Left cardiac atrium (tissue), 4 donors: ENCODE measurements at regions of chr15 and their contacts with region 1.

Region 1: GRCh38 chr15:89139400-89140166 is 51.3 kb downstream of the ABHD2 start:
- DNase-seq: no peak
- ATAC-seq: peak; percentile 15 to 31

Region 2: DNA sequence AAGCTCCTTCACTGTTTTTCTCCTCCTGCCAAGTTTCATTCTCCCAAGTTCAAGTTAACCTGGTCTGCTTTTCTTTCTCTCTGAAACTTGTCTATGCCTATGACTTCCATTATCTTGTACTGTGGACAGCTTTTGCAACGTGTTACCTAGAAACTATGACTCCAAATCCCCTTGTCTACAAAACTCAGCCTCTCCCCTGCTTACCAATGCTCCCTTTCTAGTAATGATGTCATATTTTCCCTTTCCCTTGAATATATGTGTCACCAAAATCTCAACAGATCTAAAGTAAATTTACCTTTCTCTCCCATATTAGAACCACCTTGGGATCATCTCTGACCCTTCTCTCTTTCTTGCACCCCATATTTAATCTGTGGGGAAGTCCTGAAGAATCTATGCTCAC is 61.8 kb before region 1 on chr15:
- intact Hi-C with region 1: no loop called
- DNase-seq: no peak
- ATAC-seq: no peak

Region 3: DNA sequence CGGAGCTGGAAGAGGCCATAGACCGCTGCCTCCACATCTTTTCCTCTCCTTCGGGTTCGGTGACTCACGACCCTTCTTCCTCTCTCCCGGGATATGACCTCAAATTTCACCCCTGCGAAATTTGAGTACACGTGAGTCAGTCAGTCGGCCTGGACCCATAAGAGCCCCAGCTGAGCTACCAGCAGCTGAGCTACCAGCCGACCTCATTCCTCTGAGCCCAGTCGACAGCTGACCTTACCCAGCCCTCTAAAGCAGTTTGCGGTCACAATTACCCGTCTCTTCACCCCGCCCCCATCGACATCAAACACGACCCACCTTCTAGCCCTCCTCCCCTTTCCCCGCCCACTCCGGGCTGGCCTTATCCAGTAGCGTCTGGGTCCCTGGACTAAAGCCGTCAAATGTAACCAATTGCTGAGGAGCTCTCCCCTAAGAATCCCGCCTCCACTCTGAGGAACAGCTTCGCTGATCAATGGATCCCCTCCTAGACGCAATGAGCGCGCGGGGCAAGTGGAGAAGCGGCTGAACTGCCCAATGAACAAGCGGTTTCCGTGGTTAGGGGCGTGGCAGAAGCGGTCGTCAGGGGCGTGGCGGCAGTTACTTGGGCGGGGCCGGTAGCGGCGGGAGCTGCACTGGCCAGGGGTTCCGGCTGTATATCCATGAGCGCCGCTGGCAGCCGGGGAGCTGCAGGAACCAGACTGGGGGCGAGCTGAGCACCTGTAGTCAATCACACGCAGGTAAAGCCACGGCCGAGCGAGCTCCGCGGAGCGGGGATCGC is 51.6 kb before region 1 on chr15 and contains the start of gene ABHD2:
- intact Hi-C with region 1: loop called in 1 of 2 experiments (anchors 5 kb)
- DNase-seq: peak; percentile 99
- ATAC-seq: peak; percentile 94 to 95
- total RNA-seq, gene ABHD2: 91.6 to 208 TPM